ENCODE measurements at regions of chr10 and their contacts with region 1.

Region 1: GRCh38 chr10:129222436-129222835 is 244.6 kb upstream of the MGMT start:
- DNase-seq: no peak
- H3K4me3 ChIP-seq: no peak overlapping the region
- H3K27ac ChIP-seq: no peak overlapping the region
- H3K4me1 ChIP-seq: no peaks in the 10 kb centered on the region
- CTCF ChIP-seq: no peak

Region 2: DNA sequence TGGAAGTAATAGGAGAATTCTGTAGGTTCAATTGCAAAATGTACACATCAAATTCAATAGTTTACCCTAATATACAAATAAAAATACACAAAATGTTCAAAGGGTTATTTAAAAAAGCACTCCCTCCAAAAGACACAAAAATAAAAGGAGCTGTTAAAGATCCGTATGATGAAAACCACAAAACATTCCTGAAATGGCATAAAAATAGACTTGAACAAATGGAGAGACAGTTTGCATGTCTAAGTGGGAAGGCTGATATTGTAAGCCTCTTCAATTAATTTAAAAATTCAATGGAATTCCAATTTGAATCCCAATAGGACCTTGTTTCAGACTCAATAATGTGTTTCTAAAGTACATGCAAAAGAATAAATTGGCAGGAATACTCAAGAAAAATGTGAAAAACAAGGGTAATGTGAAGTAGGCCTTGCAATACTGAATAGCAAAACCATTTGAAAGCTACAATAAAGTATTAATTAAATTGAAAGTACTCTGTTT is 1988.1 kb before region 1 on chr10:
- CTCF ChIA-PET with region 1: no interaction called
- POLR2A ChIA-PET with region 1: no interaction called
- intact Hi-C with region 1: no loop called
- DNase-seq: no peak
- H3K4me3 ChIP-seq: no peak overlapping the region
- H3K27ac ChIP-seq: no peak overlapping the region
- H3K4me1 ChIP-seq: no peaks in the 10 kb centered on the region
- CTCF ChIP-seq: no peak

Region 3: GRCh38 chr10:129258283-129258923 is 36.0 kb after region 1 on chr10:
- CTCF ChIA-PET with region 1: no interaction called
- POLR2A ChIA-PET with region 1: no interaction called
- intact Hi-C with region 1: loop called (anchors 1 kb)
- DNase-seq: no peak
- H3K4me3 ChIP-seq: no peak overlapping the region
- H3K27ac ChIP-seq: no peak overlapping the region
- H3K4me1 ChIP-seq: no peaks in the 10 kb centered on the region
- CTCF ChIP-seq: no peak

Region 4: DNA sequence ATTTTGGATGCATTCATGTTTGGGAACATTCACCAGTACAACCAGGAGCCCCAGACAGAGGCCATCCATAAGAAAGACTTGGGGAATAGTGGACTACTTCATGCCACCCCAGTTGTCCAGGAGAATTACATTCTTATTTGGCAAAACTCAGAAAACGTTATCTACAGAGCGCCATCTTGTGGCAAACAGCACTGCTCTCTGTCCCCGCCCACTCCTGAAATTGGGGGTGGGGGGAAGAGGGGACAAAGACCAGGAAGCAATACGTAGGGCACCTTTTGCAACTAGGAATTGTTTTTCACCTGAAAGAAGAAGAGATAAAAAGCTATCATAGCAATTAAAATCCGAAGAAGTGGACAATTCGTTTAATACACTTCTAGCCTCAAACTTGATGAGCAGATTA is 110.0 kb after region 1 on chr10:
- CTCF ChIA-PET with region 1: no interaction called
- POLR2A ChIA-PET with region 1: no interaction called
- intact Hi-C with region 1: no loop called
- DNase-seq: peak; percentile 35
- H3K4me3 ChIP-seq: no peak overlapping the region
- H3K27ac ChIP-seq: no peak overlapping the region
- H3K4me1 ChIP-seq: no peaks in the 10 kb centered on the region
- CTCF ChIP-seq: peak; percentile 85

Region 5: GRCh38 chr10:129646973-129647372 is 424.5 kb after region 1 on chr10:
- CTCF ChIA-PET with region 1: no interaction called
- POLR2A ChIA-PET with region 1: no interaction called
- intact Hi-C with region 1: no loop called
- DNase-seq: no peak
- H3K4me3 ChIP-seq: no peak overlapping the region
- H3K27ac ChIP-seq: no peak overlapping the region
- H3K4me1 ChIP-seq: no peaks in the 10 kb centered on the region
- CTCF ChIP-seq: no peak

Measured in OCI-LY7 (cell line).